MCF 10A (cell line): ENCODE measurements at regions of chr1 and their contacts with region 1.

Region 1: DNA sequence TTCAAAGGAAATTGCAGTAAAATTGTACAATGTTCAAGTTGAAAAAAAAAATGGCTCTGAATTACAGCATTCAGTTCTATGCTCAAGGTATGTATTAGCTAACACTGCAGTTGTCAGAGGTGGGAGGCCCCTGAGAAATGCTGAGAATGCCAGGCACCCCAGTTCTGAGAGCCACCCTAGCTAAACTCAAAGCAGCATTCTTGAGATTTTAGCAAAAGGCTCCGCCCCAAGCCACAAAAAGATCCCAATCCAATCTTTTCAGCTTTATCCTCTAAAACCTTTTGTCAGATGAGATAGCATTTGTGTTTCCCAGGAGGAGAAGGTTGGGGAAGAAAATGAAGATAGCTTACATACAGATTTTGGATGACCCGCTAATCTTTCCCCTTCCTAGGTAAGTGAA is 68.8 kb downstream of the SMYD2 start:
- DNase-seq: no peak
- H3K4me3 Mint-ChIP-seq: no peak overlapping the region
- H3K27ac Mint-ChIP-seq: peak overlapping the region; percentile 23
- H3K4me1 Mint-ChIP-seq: no peaks in the 10 kb centered on the region
- H3K27me3 Mint-ChIP-seq: no peaks in the 10 kb centered on the region
- CTCF ChIP-seq: no peak

Region 2: DNA sequence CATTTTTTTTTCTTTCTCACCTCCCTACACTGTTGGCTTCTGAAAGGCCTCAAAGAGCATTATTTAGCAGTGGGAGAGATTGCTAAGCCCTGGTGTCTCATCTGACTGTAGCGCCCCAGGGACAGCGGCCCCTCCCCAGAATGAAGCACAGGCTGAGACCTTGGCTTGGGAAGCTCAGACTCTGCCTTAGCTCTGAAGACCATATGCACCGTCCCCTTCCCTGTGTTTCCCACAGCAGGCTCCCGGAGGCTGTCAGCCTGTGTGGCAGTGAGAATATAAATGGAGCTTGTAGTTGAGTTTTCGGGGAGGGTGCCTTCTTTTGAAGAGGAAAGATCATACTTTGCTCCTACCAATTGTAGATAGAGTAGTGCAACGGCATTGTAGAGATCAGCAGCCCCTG is 43.5 kb before region 1 on chr1:
- CTCF ChIA-PET with region 1: no interaction called
- POLR2A ChIA-PET with region 1: no interaction called
- intact Hi-C with region 1: no loop called
- DNase-seq: no peak
- H3K4me3 Mint-ChIP-seq: no peak overlapping the region
- H3K27ac Mint-ChIP-seq: no peak overlapping the region
- H3K4me1 Mint-ChIP-seq: no peaks in the 10 kb centered on the region
- H3K27me3 Mint-ChIP-seq: no peaks in the 10 kb centered on the region
- CTCF ChIP-seq: no peak

Region 3: DNA sequence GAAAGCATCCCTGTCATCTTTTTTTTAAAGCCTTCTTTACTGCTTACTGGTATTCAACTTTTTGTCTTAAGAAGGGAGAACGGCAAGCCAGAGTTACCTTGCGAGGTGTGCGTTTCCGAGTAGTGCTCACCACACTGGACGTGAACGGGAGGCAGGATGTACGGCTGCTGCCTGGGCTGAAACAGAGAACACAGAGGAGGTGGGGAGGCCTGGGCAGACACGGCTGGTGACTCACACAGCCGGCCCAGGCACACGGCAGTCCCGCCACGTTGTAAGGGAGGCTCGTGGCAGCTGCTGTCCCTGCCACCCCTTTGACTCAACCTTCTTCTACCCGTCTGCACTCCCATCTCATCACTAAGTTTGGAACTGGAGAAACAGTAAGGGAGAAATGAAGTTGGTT is 37.0 kb after region 1 on chr1:
- CTCF ChIA-PET with region 1: interaction called, 13 read pairs
- POLR2A ChIA-PET with region 1: interaction called, 3 read pairs
- intact Hi-C with region 1: no loop called
- DNase-seq: peak; percentile 83
- H3K4me3 Mint-ChIP-seq: no peak overlapping the region
- H3K27ac Mint-ChIP-seq: peak overlapping the region; percentile 76
- H3K4me1 Mint-ChIP-seq: peaks cover 14% of the 10 kb centered on the region
- H3K27me3 Mint-ChIP-seq: no peaks in the 10 kb centered on the region
- CTCF ChIP-seq: no peak

Region 4: GRCh38 chr1:214590696-214591095 is 240.9 kb after region 1 on chr1:
- CTCF ChIA-PET with region 1: interaction called, 25 read pairs
- POLR2A ChIA-PET with region 1: interaction called, 3 read pairs
- intact Hi-C with region 1: no loop called
- DNase-seq: no peak
- H3K4me3 Mint-ChIP-seq: no peak overlapping the region
- H3K27ac Mint-ChIP-seq: no peak overlapping the region
- H3K4me1 Mint-ChIP-seq: no peaks in the 10 kb centered on the region
- H3K27me3 Mint-ChIP-seq: no peaks in the 10 kb centered on the region
- CTCF ChIP-seq: peak; percentile 33